Panc1 (cell line): ENCODE measurements at regions of chr1 and their contacts with region 1.

Region 1: DNA sequence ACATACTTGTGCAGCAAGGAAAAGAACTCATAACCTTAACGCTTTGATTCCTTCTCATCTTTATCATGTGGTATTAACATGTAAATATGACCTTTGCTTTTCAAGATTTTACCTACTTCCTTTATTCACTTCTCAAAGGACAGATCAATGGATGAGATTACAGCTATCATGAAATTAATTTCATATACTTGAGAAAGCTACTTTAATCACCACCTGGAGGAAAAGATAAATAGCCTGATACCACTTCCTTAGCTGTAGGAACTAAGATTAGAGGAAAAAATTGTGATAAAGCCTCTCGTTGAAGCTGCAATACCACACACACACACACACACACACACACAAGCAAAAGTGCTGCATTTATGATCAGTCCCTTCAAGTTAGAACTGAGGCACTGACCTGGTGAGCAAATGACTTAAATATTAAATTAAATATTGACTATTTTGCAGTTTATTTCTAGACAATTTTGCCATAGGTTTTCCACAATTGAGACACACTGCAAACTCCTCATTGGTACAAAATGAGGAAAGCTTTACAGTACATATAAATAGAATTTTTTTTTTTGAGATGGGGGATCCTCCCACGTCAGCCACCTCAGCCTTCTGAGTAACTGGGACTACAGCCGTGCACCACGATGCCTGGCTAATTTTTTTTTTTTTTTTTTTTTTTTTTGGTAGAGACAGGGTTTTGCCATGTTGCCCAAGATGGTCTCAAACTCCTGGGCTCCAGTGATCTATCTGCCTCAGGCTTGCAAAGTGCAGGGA is 27.2 kb upstream of the DMRTB1 start:
- DNase-seq: no peak
- ATAC-seq: no peak
- H3K4me3 ChIP-seq: no peak overlapping the region
- H3K27ac ChIP-seq: no peak overlapping the region
- H3K4me1 ChIP-seq: no peaks in the 10 kb centered on the region
- H3K27me3 ChIP-seq: peaks cover 6% of the 10 kb centered on the region
- CTCF ChIP-seq: no peak

Region 2: GRCh38 chr1:53717025-53717804 is 285.2 kb after region 1 on chr1:
- CTCF ChIA-PET with region 1: interaction called, 16 read pairs
- POLR2A ChIA-PET with region 1: no interaction called
- in situ Hi-C with region 1: no loop called
- intact Hi-C with region 1: no loop called
- DNase-seq: no peak
- ATAC-seq: no peak
- H3K4me3 ChIP-seq: no peak overlapping the region
- H3K27ac ChIP-seq: no peak overlapping the region
- H3K4me1 ChIP-seq: no peaks in the 10 kb centered on the region; the same call in 1 of the 2 replicates
- H3K27me3 ChIP-seq: no peaks in the 10 kb centered on the region
- CTCF ChIP-seq: no peak